ENCODE measurements at regions of chr7 and their contacts with region 1.

Region 1: DNA sequence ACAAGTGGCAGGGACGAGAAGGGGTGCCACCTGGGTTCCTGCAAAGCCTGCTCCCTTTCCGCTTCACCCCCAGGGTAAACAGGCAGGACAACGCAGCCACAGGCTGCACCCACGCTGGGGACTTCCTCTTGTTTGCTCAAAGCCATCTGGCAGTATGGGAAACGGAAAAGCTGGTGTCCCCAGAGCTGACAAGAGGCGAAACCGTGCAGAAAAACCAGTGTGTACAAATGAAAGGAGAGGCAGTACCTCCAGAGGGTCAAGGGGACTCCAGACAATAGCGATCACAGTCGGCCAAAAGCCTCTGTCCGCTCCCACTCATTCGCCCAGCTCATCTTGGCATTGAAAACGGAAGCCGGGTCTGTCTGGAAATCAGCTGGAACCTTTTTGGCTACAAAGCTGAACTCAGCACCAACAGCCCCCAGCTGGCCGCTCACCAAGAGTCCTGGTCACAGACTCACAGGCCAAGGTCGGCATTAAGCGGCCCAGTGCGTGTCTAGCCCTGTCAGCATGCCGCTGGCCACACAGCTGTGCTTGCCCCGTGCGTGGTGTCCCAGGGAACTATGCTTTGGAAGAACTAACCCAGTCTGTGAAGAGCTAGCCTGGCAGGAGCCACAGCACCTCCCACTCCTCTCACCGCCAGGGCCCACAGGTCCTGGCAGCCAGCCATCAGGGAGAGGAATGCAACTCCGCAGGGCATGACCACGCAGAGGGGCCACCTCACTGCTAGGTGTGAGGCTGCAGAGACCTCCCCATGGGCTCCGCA is 10.4 kb downstream of the TNS3 start:
- DNase-seq: peak; percentile 95
- ATAC-seq: peak; percentile 66
- H3K4me3 ChIP-seq: no peak overlapping the region
- H3K27ac ChIP-seq: peak overlapping the region; percentile 25
- H3K4me1 ChIP-seq: peaks cover 41% of the 10 kb centered on the region
- H3K27me3 ChIP-seq: no peaks in the 10 kb centered on the region
- CTCF ChIP-seq: no peak
- POLR2A ChIP-seq: no peak; the same call in 1 of the 2 replicates
- RAD21 ChIP-seq: peak; percentile 2

Region 2: GRCh38 chr7:47453093-47454049 is 118.1 kb before region 1 on chr7:
- CTCF ChIA-PET with region 1: interaction called, 5 read pairs
- POLR2A ChIA-PET with region 1: no interaction called
- dilution Hi-C with region 1: no loop called
- in situ Hi-C with region 1: no loop called
- intact Hi-C with region 1: loop called (anchors 5 kb)
- DNase-seq: peak; percentile 98
- ATAC-seq: peak; percentile 55
- H3K4me3 ChIP-seq: no peak overlapping the region
- H3K27ac ChIP-seq: peak overlapping the region; percentile 90
- H3K4me1 ChIP-seq: peaks cover 48% of the 10 kb centered on the region
- H3K27me3 ChIP-seq: no peaks in the 10 kb centered on the region
- CTCF ChIP-seq: no peak
- POLR2A ChIP-seq: no peak; the same call in 1 of the 2 replicates
- RAD21 ChIP-seq: no peak

Region 3: DNA sequence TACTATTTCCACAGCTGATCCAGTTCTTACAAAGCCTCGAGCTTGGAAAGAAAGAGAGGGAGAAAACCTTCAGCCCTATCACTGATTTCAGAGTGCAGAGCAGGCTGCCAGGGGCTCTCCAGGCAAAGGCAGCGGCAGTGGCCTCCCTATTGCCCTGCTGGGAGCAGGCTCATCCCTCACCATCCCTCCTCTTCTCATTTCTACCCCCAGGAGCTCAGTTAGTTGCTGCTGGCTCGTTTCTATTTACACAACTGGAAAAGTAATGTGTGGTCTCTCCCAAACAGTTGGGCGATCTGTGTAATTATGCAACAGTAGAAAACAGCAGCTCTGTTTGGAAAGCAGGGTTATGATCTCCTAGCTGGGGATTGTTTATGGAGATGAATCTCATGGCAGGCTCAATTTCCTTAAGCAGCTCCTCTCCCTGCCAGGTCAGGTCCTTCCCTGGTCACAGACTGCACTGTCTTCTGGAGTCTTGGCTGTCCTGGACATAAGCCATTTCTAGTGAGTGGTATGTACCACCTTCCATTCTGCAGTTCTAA is 39.1 kb after region 1 on chr7:
- CTCF ChIA-PET with region 1: no interaction called
- POLR2A ChIA-PET with region 1: no interaction called
- dilution Hi-C with region 1: no loop called
- in situ Hi-C with region 1: no loop called
- intact Hi-C with region 1: loop called (anchors 5 kb)
- DNase-seq: peak; percentile 94
- ATAC-seq: peak; percentile 85
- H3K4me3 ChIP-seq: no peak overlapping the region
- H3K27ac ChIP-seq: peak overlapping the region; percentile 86
- H3K4me1 ChIP-seq: peaks cover 19% of the 10 kb centered on the region
- H3K27me3 ChIP-seq: no peaks in the 10 kb centered on the region; the same call in 1 of the 2 replicates
- CTCF ChIP-seq: no peak
- POLR2A ChIP-seq: peak; percentile 25; the same call in 1 of the 2 replicates
- RAD21 ChIP-seq: peak; percentile 8; the same call in 1 of the 2 replicates

Region 4: DNA sequence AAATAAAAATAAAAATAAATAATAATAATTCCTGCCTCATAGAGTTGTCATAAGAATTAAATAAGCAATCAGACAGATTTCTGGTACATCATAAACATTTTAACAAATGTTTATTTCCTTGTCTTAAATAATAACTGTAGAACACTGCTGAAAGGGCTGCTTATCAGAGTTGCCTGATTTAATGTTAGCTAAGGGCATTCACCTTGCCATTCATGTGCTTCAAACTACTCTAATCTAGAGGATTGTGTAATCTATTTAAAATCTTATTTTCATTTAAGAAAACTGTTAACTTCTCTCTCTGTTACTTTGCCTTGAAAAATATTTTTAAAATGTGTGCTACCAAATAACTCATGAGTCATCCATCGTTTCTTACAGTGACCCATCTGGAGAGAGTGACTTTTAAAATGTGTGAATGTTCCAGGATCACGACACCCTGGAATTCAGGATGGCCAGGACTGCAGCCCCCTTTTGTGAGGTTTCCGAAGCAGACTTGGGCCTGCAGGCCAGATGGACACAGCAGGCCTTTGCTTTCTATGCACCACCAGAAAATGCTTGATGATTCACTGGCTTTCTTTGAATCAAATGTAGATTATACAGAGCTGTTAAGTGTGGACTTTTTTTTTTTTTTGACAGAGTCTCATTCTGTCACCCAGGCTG is 119.5 kb after region 1 on chr7:
- CTCF ChIA-PET with region 1: no interaction called
- POLR2A ChIA-PET with region 1: no interaction called
- dilution Hi-C with region 1: no loop called
- in situ Hi-C with region 1: no loop called
- intact Hi-C with region 1: no loop called
- DNase-seq: peak; percentile 65
- ATAC-seq: peak; percentile 76
- H3K4me3 ChIP-seq: no peak overlapping the region
- H3K27ac ChIP-seq: peak overlapping the region; percentile 33
- H3K4me1 ChIP-seq: peaks cover 6% of the 10 kb centered on the region
- H3K27me3 ChIP-seq: no peaks in the 10 kb centered on the region
- CTCF ChIP-seq: no peak
- POLR2A ChIP-seq: no peak
- RAD21 ChIP-seq: no peak

Region 5: GRCh38 chr7:47763063-47763974 is 191.8 kb after region 1 on chr7:
- CTCF ChIA-PET with region 1: no interaction called
- POLR2A ChIA-PET with region 1: no interaction called
- dilution Hi-C with region 1: no loop called
- in situ Hi-C with region 1: no loop called
- intact Hi-C with region 1: loop called (anchors 1 kb)
- DNase-seq: peak; percentile 96
- ATAC-seq: peak; percentile 86
- H3K4me3 ChIP-seq: no peak overlapping the region
- H3K27ac ChIP-seq: peak overlapping the region; percentile 74
- H3K4me1 ChIP-seq: peaks cover 16% of the 10 kb centered on the region
- H3K27me3 ChIP-seq: no peaks in the 10 kb centered on the region
- CTCF ChIP-seq: no peak
- POLR2A ChIP-seq: no peak
- RAD21 ChIP-seq: no peak

Measured in IMR-90 (cell line).